Activated B cell treated with CpG ODN at 0.5 μM for 24 hours (primary cell): ENCODE measurements at regions of chr1 and their contacts with region 1.

Region 1: GRCh38 chr1:72282271-72283021 is at the start of gene NEGR1:
- DNase-seq: peak; percentile 29
- ATAC-seq: peak; percentile 88
- H3K4me3 Mint-ChIP-seq: peak within 1 kb of the TSS; percentile 79
- H3K27ac Mint-ChIP-seq: peak within 1 kb of the TSS; percentile 57
- H3K4me1 Mint-ChIP-seq: peaks cover 17% of the 10 kb centered on the region
- H3K27me3 Mint-ChIP-seq: peaks cover 13% of the 10 kb centered on the region
- CTCF ChIP-seq: no peak
- total RNA-seq, gene NEGR1: not detected in 2 replicates

Region 2: GRCh38 chr1:72051538-72051937 is 230.9 kb before region 1 on chr1:
- CTCF ChIA-PET with region 1: no interaction called
- POLR2A ChIA-PET with region 1: no interaction called
- intact Hi-C with region 1: loop called (anchors 10 kb)
- DNase-seq: no peak
- ATAC-seq: no peak
- H3K4me3 Mint-ChIP-seq: no peak overlapping the region
- H3K27ac Mint-ChIP-seq: no peak overlapping the region
- H3K4me1 Mint-ChIP-seq: no peaks in the 10 kb centered on the region
- H3K27me3 Mint-ChIP-seq: no peaks in the 10 kb centered on the region
- CTCF ChIP-seq: no peak

Region 3: DNA sequence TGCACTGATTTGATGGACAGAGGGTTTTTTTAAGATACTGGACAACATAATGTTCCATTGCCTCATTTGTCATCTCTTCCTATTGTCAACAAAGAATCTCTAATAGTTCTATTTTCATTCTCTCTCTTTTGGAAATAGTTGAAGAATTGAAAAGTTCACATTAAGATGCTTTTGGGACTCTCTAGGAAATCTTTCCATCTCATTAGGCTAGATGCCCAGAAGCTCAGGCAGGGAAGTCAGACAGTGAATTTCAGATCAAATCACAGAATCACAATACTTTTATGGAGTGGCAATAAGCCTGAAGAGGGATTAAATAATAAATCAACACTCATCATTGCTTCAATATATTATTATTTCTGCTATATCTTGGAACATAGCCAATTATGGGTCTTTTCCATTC is 29.3 kb before region 1 on chr1:
- CTCF ChIA-PET with region 1: no interaction called
- POLR2A ChIA-PET with region 1: no interaction called
- intact Hi-C with region 1: no loop called
- DNase-seq: no peak
- ATAC-seq: no peak
- H3K4me3 Mint-ChIP-seq: no peak overlapping the region
- H3K27ac Mint-ChIP-seq: no peak overlapping the region
- H3K4me1 Mint-ChIP-seq: no peaks in the 10 kb centered on the region
- H3K27me3 Mint-ChIP-seq: no peaks in the 10 kb centered on the region
- CTCF ChIP-seq: no peak

Region 4: GRCh38 chr1:74197657-74198552 is 1915.5 kb after region 1 on chr1 and contains the starts of genes FPGT and LRRIQ3:
- CTCF ChIA-PET with region 1: no interaction called
- POLR2A ChIA-PET with region 1: no interaction called
- intact Hi-C with region 1: loop called (anchors 2 kb)
- DNase-seq: peak; percentile 94
- ATAC-seq: peak; percentile 96
- H3K4me3 Mint-ChIP-seq: peak within 1 kb of the TSS; percentile 87
- H3K27ac Mint-ChIP-seq: peak within 1 kb of the TSS; percentile 92
- H3K4me1 Mint-ChIP-seq: peaks cover 27% of the 10 kb centered on the region
- H3K27me3 Mint-ChIP-seq: no peaks in the 10 kb centered on the region
- CTCF ChIP-seq: no peak
- total RNA-seq, gene FPGT: 10.1 and 12.0 TPM in 2 replicates
- total RNA-seq, gene LRRIQ3: 1.00 and 1.5 TPM in 2 replicates